HAP-1 (cell line): ENCODE measurements at regions of chr10 and their contacts with region 1.

Region 1: GRCh38 chr10:130190055-130190736 is 54.0 kb downstream of the GLRX3 start:
- DNase-seq: peak; percentile 54 to 92
- H3K4me3 ChIP-seq: peak overlapping the region; percentile 27; the same call in 1 of the 2 replicates
- H3K4me1 ChIP-seq: peaks cover 4% of the 10 kb centered on the region; the same call in 1 of the 2 replicates
- H3K27me3 ChIP-seq: no peaks in the 10 kb centered on the region

Region 2: GRCh38 chr10:129742742-129743550 is 447.2 kb before region 1 on chr10:
- in situ Hi-C with region 1: no loop called
- DNase-seq: no peak
- H3K4me3 ChIP-seq: no peak overlapping the region
- H3K4me1 ChIP-seq: no peaks in the 10 kb centered on the region
- H3K27me3 ChIP-seq: no peaks in the 10 kb centered on the region

Region 3: DNA sequence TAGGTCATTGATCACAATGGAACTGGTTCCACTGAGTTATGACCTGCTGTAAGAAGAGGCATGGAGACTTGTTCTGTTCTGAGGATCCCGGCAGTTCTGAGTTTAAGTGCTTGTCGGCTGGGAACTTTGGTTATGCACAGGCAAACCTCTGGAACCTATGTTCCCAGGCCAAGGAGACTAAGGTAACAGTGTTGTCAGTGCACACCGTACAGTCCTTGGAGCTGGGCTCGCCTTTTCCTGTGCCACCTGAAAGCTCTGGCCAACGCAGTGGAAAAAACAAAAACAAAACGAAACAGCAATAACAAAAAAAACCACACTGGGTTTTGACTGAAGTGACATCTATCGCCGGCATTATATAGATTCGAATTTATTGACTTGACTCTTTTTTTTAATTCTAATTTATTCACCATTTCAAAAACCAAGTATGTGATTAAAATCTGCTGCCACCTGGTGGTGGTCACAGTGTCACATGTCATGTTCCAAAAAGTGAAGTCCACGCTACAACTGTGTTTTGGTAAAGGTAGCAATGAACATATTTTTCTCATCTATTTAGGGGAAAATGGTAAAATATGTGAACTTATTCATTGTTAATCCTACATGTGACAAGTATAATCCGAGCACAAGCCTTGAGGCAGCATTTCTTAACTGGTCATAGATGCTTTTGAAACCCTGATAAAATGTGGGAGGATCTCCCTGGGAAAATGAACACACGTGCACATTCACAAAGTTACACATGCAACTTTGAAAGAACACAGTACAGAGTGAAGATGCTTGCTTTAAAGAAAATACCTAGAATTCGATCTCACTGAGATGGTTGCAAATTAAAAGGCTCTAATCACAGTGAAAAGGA is 1596.8 kb after region 1 on chr10:
- in situ Hi-C with region 1: loop called (anchors 25 kb)
- DNase-seq: peak in 1 of 2 experiments; percentile 64
- H3K4me3 ChIP-seq: no peak overlapping the region
- H3K4me1 ChIP-seq: no peaks in the 10 kb centered on the region
- H3K27me3 ChIP-seq: no peaks in the 10 kb centered on the region

Region 4: DNA sequence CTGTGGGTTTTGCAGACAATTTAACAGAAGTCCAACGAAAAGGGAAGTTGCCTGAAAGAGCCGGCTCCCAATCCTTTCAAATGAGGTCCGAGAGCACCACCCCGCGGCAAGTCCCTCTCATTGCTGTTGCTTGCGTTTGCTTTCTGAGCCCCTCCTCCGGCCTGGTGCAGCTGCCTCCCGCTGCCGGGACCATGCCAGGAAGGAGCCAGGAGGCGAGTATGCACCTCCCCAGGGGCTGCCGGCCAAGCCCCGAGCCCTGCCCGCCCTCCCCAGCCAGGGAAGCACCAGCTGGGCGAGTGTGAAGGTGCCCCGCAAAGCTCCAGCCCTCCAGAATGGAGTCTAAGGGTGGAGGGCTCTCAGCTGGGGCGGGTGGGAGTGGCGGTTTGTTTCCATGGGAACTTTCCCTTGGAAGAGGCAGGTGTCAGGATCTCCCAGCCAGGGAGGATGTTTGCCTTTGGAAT is 1684.8 kb after region 1 on chr10:
- in situ Hi-C with region 1: loop called (anchors 10 kb)
- DNase-seq: peak; percentile 80 to 90
- H3K4me3 ChIP-seq: no peak overlapping the region
- H3K4me1 ChIP-seq: no peaks in the 10 kb centered on the region
- H3K27me3 ChIP-seq: peaks cover 12% of the 10 kb centered on the region